AG04450 (cell line): ENCODE measurements at regions of chr3 and their contacts with region 1.

Region 1: GRCh38 chr3:46918634-46919033 is 41.1 kb downstream of the PTH1R start:
- DNase-seq: no peak
- H3K4me3 ChIP-seq: no peak overlapping the region
- H3K27ac ChIP-seq: no peak overlapping the region
- H3K27me3 ChIP-seq: no peaks in the 10 kb centered on the region
- CTCF ChIP-seq: no peak

Region 2: DNA sequence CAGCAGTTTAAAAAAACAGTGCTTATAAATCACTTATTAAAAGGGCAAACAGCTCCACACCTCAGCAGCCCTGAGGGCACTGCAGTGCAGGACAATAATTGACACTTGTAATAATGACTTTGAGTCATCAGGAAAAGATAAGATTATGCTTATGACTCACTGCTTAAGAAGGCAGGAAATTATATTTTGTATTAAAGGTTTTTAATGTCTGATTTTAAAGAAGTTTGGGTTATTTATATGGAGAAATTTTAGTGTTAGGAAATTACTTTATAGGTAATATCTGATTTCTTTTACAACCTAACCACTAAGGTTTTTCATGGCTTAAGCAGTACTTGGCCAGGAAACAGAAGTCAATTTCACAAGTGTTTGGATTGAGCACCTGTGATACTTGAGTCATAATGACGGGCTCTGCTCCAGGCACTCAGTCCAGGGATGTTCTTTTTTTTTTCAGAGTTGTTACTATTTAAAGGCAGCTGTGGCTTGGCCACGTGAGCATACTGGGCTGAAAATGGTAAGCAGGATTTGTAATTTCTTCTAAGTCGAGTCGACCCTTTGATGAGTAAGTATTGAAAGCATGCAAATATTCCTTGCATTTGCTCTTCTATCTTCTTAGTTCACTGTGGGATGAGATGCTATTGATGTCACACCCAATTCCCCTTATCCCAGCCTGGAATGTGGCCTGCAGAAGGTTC is 1100.7 kb before region 1 on chr3:
- CTCF ChIA-PET with region 1: no interaction called
- POLR2A ChIA-PET with region 1: no interaction called
- DNase-seq: peak; percentile 97
- H3K4me3 ChIP-seq: no peak overlapping the region
- H3K27ac ChIP-seq: peak overlapping the region; percentile 91
- H3K27me3 ChIP-seq: peaks cover 8% of the 10 kb centered on the region
- CTCF ChIP-seq: no peak

Region 3: GRCh38 chr3:46998852-46999515 is 80.3 kb after region 1 on chr3:
- CTCF ChIA-PET with region 1: interaction called, 11 read pairs
- POLR2A ChIA-PET with region 1: no interaction called
- DNase-seq: no peak
- H3K4me3 ChIP-seq: no peak overlapping the region
- H3K27ac ChIP-seq: no peak overlapping the region
- H3K27me3 ChIP-seq: no peaks in the 10 kb centered on the region
- CTCF ChIP-seq: no peak